ENCODE measurements at regions of chr17 and their contacts with region 1.

Region 1: GRCh38 chr17:7915611-7916382 is at the start of gene RNF227:
- DNase-seq: peak; percentile 84 to 88 (median 84)
- H3K4me3 ChIP-seq: peak within 1 kb of the TSS; percentile 33 to 71
- H3K4me3 Mint-ChIP-seq: peak within 1 kb of the TSS; percentile 88 to 95 (median 90)
- H3K27ac ChIP-seq: peak within 1 kb of the TSS; percentile 67
- H3K27ac Mint-ChIP-seq: peak within 1 kb of the TSS; percentile 91 to 95 (median 93)
- H3K4me1 ChIP-seq: peaks cover 26% of the 10 kb centered on the region
- H3K4me1 Mint-ChIP-seq: peaks cover 19 to 34% (median 24%) of the 10 kb centered on the region in 4 donors
- H3K27me3 ChIP-seq: no peaks in the 10 kb centered on the region
- H3K27me3 Mint-ChIP-seq: no peaks in the 10 kb centered on the region
- total RNA-seq, gene RNF227: 6.7 to 7.4 TPM

Region 2: DNA sequence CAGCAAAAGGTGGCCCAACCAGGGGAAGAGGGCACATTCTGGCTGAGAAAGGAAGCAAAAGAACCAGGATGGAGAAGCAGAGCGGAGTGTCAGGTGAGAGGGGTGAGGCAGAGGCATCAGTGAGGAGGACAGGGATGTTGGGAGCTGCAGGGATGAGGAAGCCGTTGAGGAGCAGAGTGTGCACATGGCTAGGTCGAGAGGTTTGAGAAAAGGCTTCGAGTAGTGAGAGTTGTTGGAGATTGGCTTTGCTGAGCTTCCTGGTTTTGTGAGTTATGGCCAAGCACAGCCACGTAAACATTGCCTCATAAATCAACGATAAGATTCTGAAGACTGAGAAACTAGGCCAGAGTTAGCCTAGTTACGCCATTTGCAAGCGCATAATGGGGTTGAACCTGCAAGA is 171.4 kb before region 1 on chr17:
- CTCF ChIA-PET with region 1: interaction called, 5 read pairs
- POLR2A ChIA-PET with region 1: no interaction called
- intact Hi-C with region 1: loop called (anchors 1 kb)
- DNase-seq: no peak
- H3K4me3 ChIP-seq: no peak overlapping the region
- H3K4me3 Mint-ChIP-seq: no peak overlapping the region
- H3K27ac ChIP-seq: no peak overlapping the region
- H3K27ac Mint-ChIP-seq: no peak overlapping the region
- H3K4me1 ChIP-seq: no peaks in the 10 kb centered on the region
- H3K4me1 Mint-ChIP-seq: peaks cover 0 to 4% (median 2%) of the 10 kb centered on the region in 4 donors
- H3K27me3 ChIP-seq: no peaks in the 10 kb centered on the region
- H3K27me3 Mint-ChIP-seq: peaks cover 14 to 18% of the 10 kb centered on the region in 2 donors

Region 3: GRCh38 chr17:7856883-7857723 is 58.7 kb before region 1 on chr17 and contains the start of gene NAA38:
- CTCF ChIA-PET with region 1: interaction called, 44 read pairs
- POLR2A ChIA-PET with region 1: interaction called, 26 read pairs
- intact Hi-C with region 1: loop called (anchors 1 kb)
- DNase-seq: peak; percentile 97 to 99 (median 98)
- H3K4me3 ChIP-seq: peak within 1 kb of the TSS; percentile 67 to 96
- H3K4me3 Mint-ChIP-seq: no peak within 1 kb of the TSS
- H3K27ac ChIP-seq: peak within 1 kb of the TSS; percentile 81
- H3K27ac Mint-ChIP-seq: no peak within 1 kb of the TSS
- H3K4me1 ChIP-seq: peaks cover 32% of the 10 kb centered on the region
- H3K4me1 Mint-ChIP-seq: peaks cover under 1 to 11% (median 7%) of the 10 kb centered on the region in 4 donors
- H3K27me3 ChIP-seq: no peaks in the 10 kb centered on the region
- H3K27me3 Mint-ChIP-seq: no peaks in the 10 kb centered on the region
- total RNA-seq, gene NAA38: 23.1 to 25.8 TPM

Region 4: GRCh38 chr17:7867881-7868329 is 47.9 kb before region 1 on chr17:
- CTCF ChIA-PET with region 1: interaction called, 44 read pairs
- POLR2A ChIA-PET with region 1: interaction called, 10 read pairs
- intact Hi-C with region 1: no loop called
- DNase-seq: peak in 1 of 5 donors; percentile 36
- H3K4me3 ChIP-seq: peak overlapping the region in 1 of 2 donors; percentile 29
- H3K4me3 Mint-ChIP-seq: peak overlapping the region; percentile 50 to 84 (median 72)
- H3K27ac ChIP-seq: peak overlapping the region; percentile 39
- H3K27ac Mint-ChIP-seq: peak overlapping the region; percentile 59 to 90 (median 89)
- H3K4me1 ChIP-seq: peaks cover 30% of the 10 kb centered on the region
- H3K4me1 Mint-ChIP-seq: peaks cover 27 to 41% (median 34%) of the 10 kb centered on the region in 4 donors
- H3K27me3 ChIP-seq: no peaks in the 10 kb centered on the region
- H3K27me3 Mint-ChIP-seq: no peaks in the 10 kb centered on the region

Region 5: DNA sequence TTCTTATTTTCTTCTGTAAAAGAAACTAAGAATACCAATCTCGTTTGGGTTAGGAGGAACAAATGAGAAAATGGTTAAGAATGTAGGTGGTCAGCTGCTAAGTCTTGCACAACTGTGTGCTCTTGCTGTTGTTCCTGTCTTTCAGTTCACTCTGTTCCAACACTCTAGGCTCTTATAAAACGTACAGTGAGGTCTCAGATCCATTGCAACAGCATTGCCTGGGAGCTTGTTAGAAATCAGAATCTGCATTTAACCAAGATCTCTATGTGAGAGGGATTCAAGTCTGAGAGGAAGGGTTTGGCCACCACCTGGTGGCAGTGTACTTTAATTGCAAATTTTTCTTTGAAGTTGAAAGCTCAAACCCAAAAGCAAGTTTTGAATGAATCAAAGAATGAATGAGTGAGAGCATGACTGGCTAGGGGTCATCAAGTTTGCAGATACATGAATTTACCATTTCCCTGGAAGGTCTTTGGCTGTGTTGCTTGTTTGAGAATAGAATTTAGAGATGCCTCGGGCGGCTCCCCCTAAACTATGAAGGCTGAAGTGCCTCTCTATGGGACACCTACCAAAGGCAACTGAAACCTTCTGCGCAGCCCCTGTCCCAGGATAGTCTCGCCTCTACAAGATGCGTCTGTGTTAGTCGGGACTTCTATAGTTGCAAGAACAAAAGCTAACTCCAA is 125.6 kb after region 1 on chr17:
- CTCF ChIA-PET with region 1: no interaction called
- POLR2A ChIA-PET with region 1: interaction called, 9 read pairs
- intact Hi-C with region 1: loop called (anchors 1 kb)
- DNase-seq: peak; percentile 29 to 49 (median 35)
- H3K4me3 ChIP-seq: no peak overlapping the region
- H3K4me3 Mint-ChIP-seq: no peak overlapping the region
- H3K27ac ChIP-seq: no peak overlapping the region
- H3K27ac Mint-ChIP-seq: no peak overlapping the region
- H3K4me1 ChIP-seq: no peaks in the 10 kb centered on the region
- H3K4me1 Mint-ChIP-seq: peaks cover 0 to 4% (median 0%) of the 10 kb centered on the region in 4 donors
- H3K27me3 ChIP-seq: no peaks in the 10 kb centered on the region
- H3K27me3 Mint-ChIP-seq: peaks cover 15 to 16% of the 10 kb centered on the region in 2 donors

Region 6: DNA sequence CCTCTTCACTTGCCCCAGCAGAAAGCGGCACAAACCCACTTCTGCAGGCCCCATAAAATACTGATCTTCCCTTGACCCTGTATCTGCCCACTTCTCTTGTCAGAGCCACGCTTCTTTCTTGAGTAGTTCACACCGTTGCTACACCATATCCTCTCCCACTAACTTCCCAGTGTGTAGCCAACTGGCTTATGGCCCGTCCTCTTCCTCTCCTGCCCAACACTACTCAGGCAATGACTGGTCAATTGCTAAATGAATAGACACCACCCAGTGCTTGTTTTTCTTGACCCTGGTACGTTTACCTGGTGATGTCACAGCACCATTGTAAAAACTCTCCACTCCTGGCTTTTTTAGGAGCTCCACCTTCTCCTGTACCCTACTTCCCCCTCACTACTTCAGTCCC is 606.8 kb after region 1 on chr17:
- CTCF ChIA-PET with region 1: no interaction called
- POLR2A ChIA-PET with region 1: no interaction called
- intact Hi-C with region 1: no loop called
- DNase-seq: no peak
- H3K4me3 ChIP-seq: no peak overlapping the region
- H3K4me3 Mint-ChIP-seq: no peak overlapping the region
- H3K27ac ChIP-seq: no peak overlapping the region
- H3K27ac Mint-ChIP-seq: no peak overlapping the region
- H3K4me1 ChIP-seq: no peaks in the 10 kb centered on the region
- H3K4me1 Mint-ChIP-seq: no peaks in the 10 kb centered on the region
- H3K27me3 ChIP-seq: no peaks in the 10 kb centered on the region
- H3K27me3 Mint-ChIP-seq: peaks cover 0 to under 1% of the 10 kb centered on the region in 2 donors